Activated CD8-positive, alpha-beta T cell treated with anti-CD3 and anti-CD28 coated beads, Interleukin-2, amount 10 ng/mL, durations not matched to agents 7 days and 5 days (primary cell): ENCODE measurements at regions of chr6 and their contacts with region 1.

Region 1: GRCh38 chr6:79078075-79079025 is at the start of gene PHIP:
- DNase-seq: peak; percentile 94
- ATAC-seq: peak; percentile 88
- H3K4me3 Mint-ChIP-seq: peak within 1 kb of the TSS; percentile 93
- H3K27ac Mint-ChIP-seq: peak within 1 kb of the TSS; percentile 97
- H3K4me1 Mint-ChIP-seq: peaks cover 37% of the 10 kb centered on the region
- H3K27me3 Mint-ChIP-seq: peaks cover 12% of the 10 kb centered on the region
- total RNA-seq, gene PHIP: 29.1 to 30.2 TPM

Region 2: GRCh38 chr6:78867370-78868040 is 210.8 kb before region 1 on chr6 and contains the start of gene IRAK1BP1:
- CTCF ChIA-PET with region 1: no interaction called
- POLR2A ChIA-PET with region 1: interaction called, 11 read pairs
- DNase-seq: peak; percentile 91
- ATAC-seq: peak; percentile 98
- H3K4me3 Mint-ChIP-seq: peak within 1 kb of the TSS; percentile 94
- H3K27ac Mint-ChIP-seq: peak within 1 kb of the TSS; percentile 91
- H3K4me1 Mint-ChIP-seq: peaks cover 26% of the 10 kb centered on the region
- H3K27me3 Mint-ChIP-seq: no peaks in the 10 kb centered on the region
- total RNA-seq, gene IRAK1BP1: 2.1 to 2.4 TPM

Region 3: DNA sequence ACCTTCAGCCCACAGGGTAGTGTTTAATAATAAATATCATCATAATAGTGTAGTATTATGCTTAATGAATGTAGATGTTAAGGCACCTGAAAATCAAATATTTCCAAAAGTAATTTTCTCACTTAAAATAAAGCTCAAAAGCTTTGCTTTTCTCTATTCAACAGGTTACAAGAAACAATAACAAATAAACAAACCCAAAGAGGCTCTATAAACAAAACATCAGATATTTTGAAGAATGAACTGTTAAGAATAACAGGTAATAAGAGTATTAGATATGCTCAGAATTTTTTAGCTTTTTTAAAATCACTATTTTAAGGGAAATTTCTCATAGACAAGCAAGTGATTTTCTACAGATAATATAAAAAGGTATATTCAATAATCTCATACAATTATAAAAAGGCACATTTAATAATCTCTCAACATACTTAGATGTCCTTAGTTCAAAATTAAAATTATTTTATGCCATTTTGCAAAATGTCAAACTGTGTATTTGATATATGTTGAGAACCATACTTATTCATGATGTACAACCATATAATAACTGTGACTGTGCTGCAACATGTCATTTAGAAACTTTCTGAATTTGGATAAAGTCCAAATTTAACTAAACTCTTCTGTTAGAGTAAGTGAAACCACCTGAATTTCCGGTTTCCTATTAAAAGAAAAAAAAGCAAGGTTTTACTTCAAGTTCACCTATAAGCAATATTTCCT is 36.1 kb before region 1 on chr6:
- CTCF ChIA-PET with region 1: interaction called, 4 read pairs
- POLR2A ChIA-PET with region 1: interaction called, 11 read pairs
- DNase-seq: no peak
- ATAC-seq: no peak
- H3K4me3 Mint-ChIP-seq: no peak overlapping the region
- H3K27ac Mint-ChIP-seq: no peak overlapping the region
- H3K4me1 Mint-ChIP-seq: peaks cover 31% of the 10 kb centered on the region
- H3K27me3 Mint-ChIP-seq: no peaks in the 10 kb centered on the region

Region 4: DNA sequence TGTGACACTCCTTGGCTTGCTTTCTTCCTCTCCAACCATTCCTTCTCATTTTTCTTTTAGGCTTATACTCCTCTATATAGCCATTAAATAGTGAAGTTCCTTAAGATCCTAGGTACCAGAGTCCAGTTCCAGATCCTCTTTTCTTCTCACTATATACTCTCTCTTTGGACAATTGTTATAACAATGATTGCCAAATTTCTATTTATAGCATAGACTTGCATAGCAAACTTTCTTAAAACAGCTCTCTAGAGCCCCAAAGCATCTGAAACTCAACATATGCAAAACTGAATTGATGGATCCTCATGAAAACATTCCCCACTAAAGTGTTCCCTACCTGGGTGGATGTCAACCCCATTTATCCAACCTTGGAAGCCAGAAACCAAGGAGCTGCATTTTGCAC is 13.7 kb before region 1 on chr6:
- CTCF ChIA-PET with region 1: interaction called, 5 read pairs
- POLR2A ChIA-PET with region 1: interaction called, 15 read pairs
- DNase-seq: no peak
- ATAC-seq: no peak
- H3K4me3 Mint-ChIP-seq: no peak overlapping the region
- H3K27ac Mint-ChIP-seq: no peak overlapping the region
- H3K4me1 Mint-ChIP-seq: no peaks in the 10 kb centered on the region
- H3K27me3 Mint-ChIP-seq: no peaks in the 10 kb centered on the region